ENCODE measurements at regions of chr18 and their contacts with region 1.

Region 1: GRCh38 chr18:23131693-23132319 is 3.5 kb upstream of the CABLES1 start:
- DNase-seq: peak; percentile 56
- H3K4me3 ChIP-seq: no peak overlapping the region
- H3K27ac ChIP-seq: no peak overlapping the region
- H3K27me3 ChIP-seq: no peaks in the 10 kb centered on the region
- CTCF ChIP-seq: peak; percentile 80

Region 2: GRCh38 chr18:23115683-23116096 is 16.1 kb before region 1 on chr18:
- CTCF ChIA-PET with region 1: interaction called, 30 read pairs
- POLR2A ChIA-PET with region 1: no interaction called
- DNase-seq: peak; percentile 98
- H3K4me3 ChIP-seq: no peak overlapping the region
- H3K27ac ChIP-seq: peak overlapping the region; percentile 92
- H3K27me3 ChIP-seq: no peaks in the 10 kb centered on the region
- CTCF ChIP-seq: no peak

Region 3: DNA sequence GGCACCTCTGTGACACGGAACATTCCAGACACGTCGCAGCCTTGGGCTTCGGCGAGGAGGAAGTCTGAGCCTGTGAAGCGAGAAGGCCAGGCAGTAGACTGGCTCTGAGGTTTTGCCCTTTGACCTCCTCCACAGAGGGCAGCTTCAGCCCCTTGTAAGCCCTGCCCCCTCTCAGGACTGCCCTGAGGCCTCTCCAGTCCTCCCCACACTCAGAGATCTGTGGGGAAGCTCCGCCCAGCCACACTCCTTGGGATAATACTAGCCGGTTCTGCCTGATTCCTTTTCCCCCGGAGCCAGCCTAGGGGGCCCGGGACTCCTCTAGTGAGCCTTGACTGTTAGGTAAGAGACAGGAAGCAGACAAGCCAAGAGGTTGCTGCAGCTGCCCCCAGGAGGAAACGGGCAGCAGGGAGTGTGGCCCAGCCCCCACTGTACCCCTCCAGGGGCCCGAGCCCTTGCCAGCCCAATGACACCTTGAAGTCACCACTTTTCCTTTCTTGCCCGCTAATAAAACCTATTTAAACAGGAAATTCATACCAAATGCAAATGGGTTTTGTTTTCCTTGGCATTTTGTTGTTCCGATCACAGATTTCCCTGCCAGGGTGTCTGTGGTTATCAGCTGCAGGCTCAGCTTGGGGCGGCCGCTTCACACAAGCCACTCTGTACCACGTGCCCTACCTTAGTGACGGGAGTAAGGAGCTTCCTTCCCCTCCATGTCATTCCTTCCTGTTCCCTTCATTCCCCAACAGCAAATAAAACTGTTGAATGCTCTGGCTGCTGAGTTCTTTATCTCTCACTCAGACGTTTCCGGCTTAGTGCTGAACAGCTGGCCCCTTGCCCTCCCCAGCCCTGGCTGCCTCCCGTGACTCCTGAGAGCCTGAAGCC is 128.1 kb after region 1 on chr18:
- CTCF ChIA-PET with region 1: no interaction called
- POLR2A ChIA-PET with region 1: interaction called, 11 read pairs
- DNase-seq: peak; percentile 37
- H3K4me3 ChIP-seq: 0 out of 2 replicates have a peak overlapping the region, but pooled peaks have one; percentile 13
- H3K27ac ChIP-seq: peak overlapping the region; percentile 84
- H3K27me3 ChIP-seq: no peaks in the 10 kb centered on the region
- CTCF ChIP-seq: no peak

Region 4: GRCh38 chr18:23406271-23406787 is 274.5 kb after region 1 on chr18:
- CTCF ChIA-PET with region 1: interaction called, 39 read pairs
- POLR2A ChIA-PET with region 1: interaction called, 3 read pairs
- DNase-seq: no peak
- H3K4me3 ChIP-seq: no peak overlapping the region
- H3K27ac ChIP-seq: no peak overlapping the region
- H3K27me3 ChIP-seq: no peaks in the 10 kb centered on the region
- CTCF ChIP-seq: no peak